PC-3 (cell line): ENCODE measurements at regions of chr19 and their contacts with region 1.

Region 1: GRCh38 chr19:39445265-39446111 is at the start of gene SUPT5H:
- DNase-seq: peak; percentile 96
- ATAC-seq: peak; percentile 90
- H3K4me3 ChIP-seq: peak within 1 kb of the TSS; percentile 93
- H3K27ac ChIP-seq: peak within 1 kb of the TSS; percentile 79
- H3K4me1 ChIP-seq: peaks cover 30% of the 10 kb centered on the region
- H3K27me3 ChIP-seq: no peaks in the 10 kb centered on the region
- CTCF ChIP-seq: no peak
- total RNA-seq, gene SUPT5H: 59.9 and 95.0 TPM in 2 replicates

Region 2: DNA sequence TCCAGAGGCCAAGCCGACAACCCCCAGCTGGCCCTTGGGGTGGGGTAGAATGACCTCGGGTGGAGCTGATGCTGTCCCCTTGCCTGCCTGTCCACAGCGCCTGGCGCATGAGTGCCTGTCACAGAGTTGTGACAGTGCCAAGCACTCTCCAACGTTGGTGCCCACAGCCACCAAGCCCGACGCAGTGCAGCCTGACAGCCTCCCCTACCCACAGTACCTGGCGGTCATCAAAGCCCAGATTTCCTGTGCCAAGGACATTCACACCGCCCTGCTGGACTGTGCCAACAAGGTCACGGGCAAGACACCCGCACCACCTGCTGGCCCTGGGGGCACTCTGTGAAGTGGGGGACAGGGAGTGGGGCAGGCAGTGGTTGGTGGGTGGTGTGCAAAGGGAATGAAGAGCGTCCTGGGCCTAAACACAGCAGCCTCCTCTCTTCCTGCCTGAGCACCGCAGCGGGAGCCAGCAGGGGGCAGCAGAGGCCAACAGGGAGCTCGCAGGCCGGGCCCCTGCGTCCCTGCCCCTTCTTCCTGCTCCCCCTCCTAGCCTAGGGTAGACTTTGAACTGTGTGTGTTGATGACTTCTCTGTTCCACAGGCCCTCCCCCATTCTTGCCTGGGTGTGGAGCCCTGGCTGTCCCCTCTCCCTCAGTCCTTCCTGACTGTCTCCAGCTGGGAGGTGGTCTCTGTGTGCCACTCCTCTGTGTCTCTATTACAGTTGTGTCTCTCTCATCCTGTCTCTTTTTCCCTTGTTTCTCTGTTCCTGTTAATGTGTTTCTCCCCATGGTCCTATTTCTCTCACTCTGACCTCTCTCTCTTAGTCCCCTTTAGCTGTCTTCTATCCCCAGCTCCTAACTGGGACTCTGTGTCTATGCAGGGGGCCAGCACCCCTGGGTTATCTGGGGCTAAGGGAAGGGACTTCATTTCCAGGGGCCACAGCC is 47.9 kb before region 1 on chr19:
- CTCF ChIA-PET with region 1: interaction called, 13 read pairs
- POLR2A ChIA-PET with region 1: no interaction called
- intact Hi-C with region 1: no loop called
- DNase-seq: peak; percentile 78
- ATAC-seq: peak; percentile 64
- H3K4me3 ChIP-seq: no peak overlapping the region
- H3K27ac ChIP-seq: peak overlapping the region; percentile 68
- H3K4me1 ChIP-seq: peaks cover 30% of the 10 kb centered on the region
- H3K27me3 ChIP-seq: no peaks in the 10 kb centered on the region
- CTCF ChIP-seq: peak; percentile 82

Region 3: GRCh38 chr19:39430675-39431593 is 14.6 kb before region 1 on chr19:
- CTCF ChIA-PET with region 1: no interaction called
- POLR2A ChIA-PET with region 1: interaction called, 10 read pairs
- intact Hi-C with region 1: no loop called
- DNase-seq: peak; percentile 93
- ATAC-seq: peak; percentile 82
- H3K4me3 ChIP-seq: no peak overlapping the region
- H3K27ac ChIP-seq: peak overlapping the region; percentile 100
- H3K4me1 ChIP-seq: peaks cover 25% of the 10 kb centered on the region
- H3K27me3 ChIP-seq: no peaks in the 10 kb centered on the region
- CTCF ChIP-seq: no peak

Region 4: DNA sequence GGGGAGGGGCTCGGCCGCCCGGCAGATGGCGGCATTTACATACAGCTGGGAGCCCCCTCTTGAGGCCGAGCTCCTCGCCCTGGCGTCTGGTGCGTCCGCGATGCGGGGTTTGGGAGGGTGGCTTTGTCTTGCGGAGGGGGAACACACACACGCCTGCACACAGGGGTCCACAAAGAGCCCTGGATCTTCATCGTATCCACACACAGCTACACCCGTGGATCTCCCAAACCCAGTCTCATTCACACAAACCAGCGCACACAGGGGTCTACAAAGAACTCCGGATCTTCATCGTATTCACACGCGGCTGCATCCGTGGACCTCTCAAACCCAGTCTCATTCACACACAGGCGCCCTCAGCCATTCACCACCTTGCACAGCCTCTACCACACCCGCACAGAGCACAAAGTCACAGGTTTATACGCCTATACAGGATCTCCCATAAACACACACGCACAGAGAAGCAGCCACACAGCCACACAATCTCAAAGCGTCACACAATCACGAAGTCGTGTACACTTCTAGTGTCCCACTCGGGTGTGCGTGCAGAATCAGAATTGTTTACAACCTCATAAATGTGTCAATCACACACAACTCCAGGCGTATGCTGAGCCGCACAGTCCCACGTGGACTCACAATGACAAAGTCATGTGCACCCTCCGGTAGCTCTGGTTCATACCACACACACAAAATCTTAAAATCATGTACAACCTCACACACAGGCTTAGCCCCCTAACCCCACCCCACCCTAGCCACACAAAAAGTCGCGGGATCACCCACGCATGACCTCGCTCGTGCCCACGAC is 52.7 kb after region 1 on chr19:
- CTCF ChIA-PET with region 1: no interaction called
- POLR2A ChIA-PET with region 1: interaction called, 19 read pairs
- intact Hi-C with region 1: no loop called
- DNase-seq: peak; percentile 50
- ATAC-seq: peak; percentile 72
- H3K4me3 ChIP-seq: peak overlapping the region; percentile 63
- H3K27ac ChIP-seq: no peak overlapping the region
- H3K4me1 ChIP-seq: peaks cover 7% of the 10 kb centered on the region
- H3K27me3 ChIP-seq: no peaks in the 10 kb centered on the region
- CTCF ChIP-seq: peak; percentile 47

Region 5: GRCh38 chr19:39532233-39533002 is 86.9 kb after region 1 on chr19 and contains the start of gene EID2B:
- CTCF ChIA-PET with region 1: interaction called, 7 read pairs
- POLR2A ChIA-PET with region 1: no interaction called
- intact Hi-C with region 1: loop called (anchors 1 kb)
- DNase-seq: peak; percentile 95
- ATAC-seq: peak; percentile 94
- H3K4me3 ChIP-seq: peak within 1 kb of the TSS; percentile 89
- H3K27ac ChIP-seq: no peak within 1 kb of the TSS
- H3K4me1 ChIP-seq: peaks cover 4% of the 10 kb centered on the region; the same call in 1 of the 2 replicates
- H3K27me3 ChIP-seq: no peaks in the 10 kb centered on the region
- CTCF ChIP-seq: peak; percentile 83
- total RNA-seq, gene EID2B: 2.1 and 3.5 TPM in 2 replicates

Region 6: DNA sequence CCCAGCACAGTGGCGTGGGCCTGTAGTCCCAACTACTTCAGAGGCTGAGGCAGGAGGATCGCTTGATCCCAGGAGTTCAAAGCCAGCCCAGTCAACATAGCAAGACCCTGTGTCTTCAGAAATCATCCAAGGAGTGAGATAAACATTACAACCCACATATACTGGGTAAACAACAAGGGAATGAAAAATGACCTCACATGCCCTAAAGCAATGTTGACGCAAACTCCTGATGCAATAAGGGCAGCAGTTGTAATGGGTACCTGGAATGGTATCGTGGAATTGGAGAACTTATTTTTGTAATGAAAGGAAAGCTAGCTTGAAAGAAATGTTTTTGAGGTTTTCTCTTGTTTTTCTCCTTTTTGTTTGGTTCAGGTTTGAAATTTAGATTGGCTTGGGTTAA is 185.7 kb after region 1 on chr19:
- CTCF ChIA-PET with region 1: no interaction called
- POLR2A ChIA-PET with region 1: no interaction called
- intact Hi-C with region 1: no loop called
- DNase-seq: no peak
- ATAC-seq: no peak
- H3K4me3 ChIP-seq: no peak overlapping the region
- H3K27ac ChIP-seq: no peak overlapping the region
- H3K4me1 ChIP-seq: no peaks in the 10 kb centered on the region
- H3K27me3 ChIP-seq: peaks cover 11% of the 10 kb centered on the region
- CTCF ChIP-seq: no peak

Region 7: DNA sequence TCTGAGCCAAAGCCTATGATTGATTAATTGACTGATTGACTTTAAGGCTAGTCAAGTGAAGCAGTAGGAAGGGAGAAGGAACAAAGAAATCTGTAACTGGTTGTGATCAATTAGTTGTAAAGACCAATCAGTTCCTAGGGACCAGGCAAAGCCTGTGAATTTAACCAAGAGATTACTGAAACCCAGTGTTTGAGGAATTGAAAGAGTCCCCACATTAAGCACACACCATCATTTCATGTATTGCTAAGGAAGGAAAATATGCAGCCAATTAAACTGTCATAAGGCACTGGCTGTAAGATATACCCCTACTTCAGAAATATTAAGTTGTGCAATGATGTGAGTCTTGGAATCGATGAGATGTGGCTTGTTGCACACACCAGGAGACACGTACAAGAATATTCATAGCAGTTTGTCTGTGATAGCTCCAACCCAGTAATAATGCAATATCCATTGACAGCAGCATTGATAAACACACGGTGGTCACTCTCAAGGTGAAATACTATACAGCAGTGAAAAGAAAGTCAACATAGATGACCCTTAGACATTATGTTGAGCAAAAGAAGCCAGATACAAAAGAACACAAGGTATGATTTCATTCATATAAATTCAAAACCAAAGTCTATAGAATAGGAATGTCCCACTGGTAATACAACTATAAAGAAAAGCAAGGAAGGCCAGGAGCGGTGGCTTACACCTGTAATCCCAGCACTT is 893.7 kb after region 1 on chr19:
- CTCF ChIA-PET with region 1: no interaction called
- POLR2A ChIA-PET with region 1: interaction called, 24 read pairs
- intact Hi-C with region 1: no loop called
- DNase-seq: no peak
- ATAC-seq: no peak
- H3K4me3 ChIP-seq: no peak overlapping the region
- H3K27ac ChIP-seq: no peak overlapping the region
- H3K4me1 ChIP-seq: no peaks in the 10 kb centered on the region
- H3K27me3 ChIP-seq: no peaks in the 10 kb centered on the region
- CTCF ChIP-seq: no peak